T-cell (primary cell): ENCODE measurements at regions of chr11 and their contacts with region 1.

Region 1: GRCh38 chr11:47269002-47269828 is 718 bp upstream of the MADD start:
- DNase-seq: peak; percentile 72 to 90 (median 81)
- ATAC-seq: peak; percentile 69 to 76 (median 69)
- H3K4me3 ChIP-seq: peak overlapping the region; percentile 63 to 76
- H3K4me3 Mint-ChIP-seq: peak overlapping the region; percentile 88 to 89 (median 88)
- H3K27ac ChIP-seq: peak overlapping the region; percentile 91
- H3K27ac Mint-ChIP-seq: peak overlapping the region; percentile 90 to 97
- H3K4me1 ChIP-seq: peaks cover 27 to 45% of the 10 kb centered on the region in 2 experiments
- H3K4me1 Mint-ChIP-seq: peaks cover 51 to 68% (median 67%) of the 10 kb centered on the region in 3 donors
- H3K27me3 ChIP-seq: no peaks in the 10 kb centered on the region
- H3K27me3 Mint-ChIP-seq: no peaks in the 10 kb centered on the region

Region 2: DNA sequence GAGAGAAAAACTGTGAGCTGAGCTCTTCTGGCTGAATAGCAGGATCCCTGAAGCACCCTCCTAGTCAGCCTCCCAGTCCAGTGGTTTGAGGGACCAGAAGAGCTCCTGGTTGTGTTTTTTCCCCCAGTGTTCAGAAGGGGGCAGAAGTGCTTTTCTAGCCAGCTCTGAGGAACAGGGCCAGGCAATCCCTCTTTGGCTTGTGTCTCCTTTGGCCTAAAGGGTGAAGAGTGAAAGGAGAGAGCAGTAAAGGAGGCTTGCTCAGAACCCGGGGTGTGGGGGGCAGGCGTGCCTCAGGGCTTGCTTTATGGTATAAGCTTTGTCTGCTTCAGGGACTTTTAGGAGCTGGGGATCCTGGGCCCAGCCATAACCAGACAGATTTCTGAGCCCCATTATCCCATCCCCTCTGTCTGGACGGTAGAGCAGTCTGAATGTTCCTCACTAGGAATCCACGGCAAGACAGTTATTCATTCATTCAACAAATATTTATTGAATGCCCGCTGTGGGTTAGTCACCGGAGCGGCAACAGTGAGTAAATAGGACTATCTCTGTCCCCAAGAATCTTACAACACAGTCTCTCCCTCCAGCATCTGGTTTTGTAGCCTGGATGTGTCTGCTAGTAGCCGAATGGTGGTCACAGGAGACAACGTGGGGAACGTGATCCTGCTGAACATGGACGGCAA is 35.1 kb before region 1 on chr11:
- CTCF ChIA-PET with region 1: interaction called, 5 read pairs
- POLR2A ChIA-PET with region 1: interaction called, 8 to 14 read pairs
- DNase-seq: peak in 10 of 35 experiments; percentile 2 to 55 (median 17)
- ATAC-seq: peak in 3 of 4 experiments; percentile 50 to 54 (median 51)
- H3K4me3 ChIP-seq: no peak overlapping the region
- H3K4me3 Mint-ChIP-seq: peak overlapping the region; percentile 59 to 82 (median 71)
- H3K27ac ChIP-seq: peak overlapping the region; percentile 73
- H3K27ac Mint-ChIP-seq: peak overlapping the region; percentile 94
- H3K4me1 ChIP-seq: peaks cover 0 to 15% of the 10 kb centered on the region in 2 experiments
- H3K4me1 Mint-ChIP-seq: peaks cover 12 to 30% (median 28%) of the 10 kb centered on the region in 3 donors
- H3K27me3 ChIP-seq: no peaks in the 10 kb centered on the region
- H3K27me3 Mint-ChIP-seq: no peaks in the 10 kb centered on the region